Motor neuron (in vitro differentiated cells): ENCODE measurements at regions of chr2 and their contacts with region 1.

Region 1: GRCh38 chr2:226800941-226801784 is 1.5 kb upstream of the IRS1 start:
- ATAC-seq: peak; percentile 6 to 74 (median 63)
- H3K4me3 ChIP-seq: peak overlapping the region; percentile 36 to 89 (median 72)
- H3K27ac ChIP-seq: no peak overlapping the region
- H3K4me1 ChIP-seq: peaks cover 0 to 14% of the 10 kb centered on the region in 2 donors

Region 2: GRCh38 chr2:225668606-225669266 is 1132.4 kb before region 1 on chr2:
- in situ Hi-C with region 1: loop called in 2 of 9 experiments (anchors 5 to 10 kb)
- ATAC-seq: peak in 7 of 8 experiments; percentile 46 to 95 (median 74)
- H3K4me3 ChIP-seq: no peak overlapping the region
- H3K27ac ChIP-seq: no peak overlapping the region
- H3K4me1 ChIP-seq: peaks cover 0 to 2% of the 10 kb centered on the region in 2 donors

Region 3: GRCh38 chr2:225693259-225693658 is 1107.9 kb before region 1 on chr2:
- in situ Hi-C with region 1: loop called in 3 of 9 experiments (anchors 25 kb)
- ATAC-seq: no peak
- H3K4me3 ChIP-seq: no peak overlapping the region
- H3K27ac ChIP-seq: no peak overlapping the region
- H3K4me1 ChIP-seq: peaks cover 0 to 7% of the 10 kb centered on the region in 2 donors

Region 4: DNA sequence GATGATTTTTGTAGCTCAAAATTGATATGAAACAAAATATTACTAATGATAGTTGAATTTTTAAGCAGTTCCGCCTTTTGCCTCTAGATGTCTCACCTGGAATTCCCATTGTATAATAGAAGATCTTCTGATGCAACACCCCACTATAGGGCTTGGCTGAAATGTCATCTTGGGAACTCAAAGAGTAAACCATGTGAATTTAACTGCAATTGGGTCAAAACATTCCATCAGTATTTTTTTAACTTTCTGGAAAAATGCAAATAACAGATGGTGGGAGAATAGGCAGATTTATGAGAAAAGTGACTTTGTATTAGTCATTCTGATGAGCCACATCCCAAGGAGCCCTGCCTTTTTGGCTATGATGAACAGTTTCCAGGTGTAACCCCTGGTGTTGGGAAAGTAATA is 911.7 kb before region 1 on chr2:
- in situ Hi-C with region 1: loop called in 3 of 9 experiments (anchors 25 kb)
- ATAC-seq: peak in 7 of 8 experiments; percentile 43 to 94 (median 47)
- H3K4me3 ChIP-seq: no peak overlapping the region
- H3K27ac ChIP-seq: no peak overlapping the region
- H3K4me1 ChIP-seq: peaks cover 4 to 9% of the 10 kb centered on the region in 2 donors

Region 5: GRCh38 chr2:226514939-226515338 is 286.2 kb before region 1 on chr2:
- in situ Hi-C with region 1: no loop called
- ATAC-seq: peak in 2 of 8 experiments; percentile 61 to 74
- H3K4me3 ChIP-seq: no peak overlapping the region
- H3K27ac ChIP-seq: no peak overlapping the region
- H3K4me1 ChIP-seq: peaks cover 0 to 16% of the 10 kb centered on the region in 2 donors

Region 6: DNA sequence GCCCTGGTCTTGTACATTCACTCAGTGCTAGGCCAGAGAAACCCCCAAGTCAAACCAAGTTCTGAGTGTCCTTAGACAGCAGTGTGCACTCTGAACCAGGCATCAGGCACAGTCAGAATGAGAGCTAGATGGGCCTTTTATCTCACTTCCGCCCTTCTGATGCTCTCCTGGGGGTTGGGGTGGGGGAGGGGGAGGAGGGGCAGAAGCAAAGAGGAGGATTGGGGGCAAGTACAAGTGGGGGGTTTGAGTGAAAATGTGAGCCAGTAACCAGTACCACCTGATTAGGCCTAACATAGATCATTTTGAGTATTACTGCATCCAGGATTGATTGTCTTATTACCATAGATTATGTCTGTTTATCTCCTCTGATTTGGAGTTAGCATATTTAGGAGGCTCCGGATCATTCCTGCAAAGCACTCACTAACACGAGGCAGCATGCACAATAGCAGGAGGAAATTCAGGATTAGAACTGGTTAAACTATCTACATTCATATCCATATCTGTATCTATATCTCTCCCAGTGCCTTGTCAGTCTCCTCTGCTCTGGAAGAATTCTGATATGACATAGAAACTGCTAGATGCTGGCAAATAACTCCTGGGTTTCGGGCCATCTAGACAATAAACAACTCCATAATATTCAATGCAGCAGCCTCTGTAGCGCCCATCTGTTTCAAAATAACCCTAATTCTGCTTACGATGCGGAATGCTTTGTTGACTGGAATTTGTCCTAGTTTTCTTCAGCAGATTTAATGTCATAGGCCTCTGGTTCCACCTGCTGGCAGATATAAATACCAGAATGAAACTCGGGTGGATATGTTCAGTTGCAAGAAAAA is 183.8 kb after region 1 on chr2:
- in situ Hi-C with region 1: loop called in 1 of 9 experiments (anchors 25 kb)
- ATAC-seq: peak; percentile 70 to 89 (median 80)
- H3K4me3 ChIP-seq: no peak overlapping the region
- H3K27ac ChIP-seq: peak overlapping the region; percentile 34 to 37
- H3K4me1 ChIP-seq: peaks cover 15 to 20% of the 10 kb centered on the region in 2 donors

Region 7: DNA sequence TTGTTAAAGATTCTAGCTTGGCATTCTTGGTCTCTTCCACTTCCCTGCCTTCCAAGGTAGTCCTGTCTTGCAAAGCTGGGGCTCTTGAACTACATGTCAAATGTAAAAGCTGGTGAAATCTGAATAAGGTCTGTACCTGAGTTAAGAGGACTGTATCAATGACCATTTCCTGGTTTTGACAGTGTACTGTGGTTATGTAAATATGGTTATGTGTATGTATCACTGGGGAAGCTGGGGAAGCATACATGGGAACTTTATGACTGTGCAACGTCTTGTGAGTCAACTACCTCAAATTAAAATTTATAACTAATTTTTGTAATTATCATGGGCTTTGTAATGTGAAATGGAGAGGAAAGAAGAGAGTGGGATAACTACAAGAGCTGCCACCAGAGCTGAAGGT is 281.1 kb after region 1 on chr2:
- in situ Hi-C with region 1: loop called in 1 of 9 experiments (anchors 25 kb)
- ATAC-seq: peak in 3 of 8 experiments; percentile 63 to 91 (median 66)
- H3K4me3 ChIP-seq: no peak overlapping the region
- H3K27ac ChIP-seq: no peak overlapping the region
- H3K4me1 ChIP-seq: peaks cover 0 to 8% of the 10 kb centered on the region in 2 donors

Region 8: DNA sequence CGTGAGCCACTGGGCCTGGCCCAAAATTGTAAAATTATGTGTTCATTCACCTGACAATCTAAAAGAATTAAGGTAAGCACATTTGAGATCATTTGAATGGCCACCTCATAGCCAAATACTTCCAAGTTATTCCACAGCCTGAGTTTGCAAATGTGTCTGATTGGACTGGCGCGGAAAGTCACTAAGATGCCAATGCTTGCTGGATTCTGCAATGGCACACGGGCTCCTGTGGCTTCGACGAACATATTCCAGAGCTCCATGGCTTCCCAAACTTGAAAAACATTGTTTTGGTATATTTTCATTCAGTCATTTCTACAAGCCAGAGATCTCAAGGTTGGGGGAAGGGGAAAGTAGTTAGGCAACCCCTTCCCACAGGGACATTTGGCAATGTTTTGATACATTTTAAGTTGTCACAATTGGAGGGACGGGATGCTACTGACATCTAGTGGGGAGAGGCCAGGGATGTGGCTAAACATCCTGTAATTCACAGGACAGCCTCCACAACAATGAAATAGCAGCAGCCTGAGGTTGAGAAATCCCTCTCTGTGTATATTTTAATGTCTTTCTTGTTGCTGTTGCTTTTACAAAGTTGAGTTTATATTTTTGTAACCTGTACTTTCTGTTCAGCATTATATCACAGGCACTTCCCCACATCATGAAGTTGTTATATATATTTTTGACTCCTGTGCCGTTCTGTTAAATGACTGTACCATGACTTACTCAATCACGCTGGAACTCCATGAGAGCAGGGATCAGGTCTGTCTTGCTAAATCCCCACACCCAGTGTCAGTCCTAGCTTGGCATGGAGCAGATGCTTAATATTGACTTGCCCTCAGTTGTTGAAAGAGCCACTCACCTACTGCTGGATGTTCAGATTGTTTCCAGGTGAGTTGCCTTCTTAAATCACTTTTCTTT is 305.9 kb after region 1 on chr2:
- in situ Hi-C with region 1: loop called in 5 of 9 experiments (anchors 25 kb)
- ATAC-seq: peak; percentile 68 to 96 (median 85)
- H3K4me3 ChIP-seq: no peak overlapping the region
- H3K27ac ChIP-seq: no peak overlapping the region
- H3K4me1 ChIP-seq: no peaks in the 10 kb centered on the region